ENCODE measurements at regions of chr14 and their contacts with region 1.

Region 1: DNA sequence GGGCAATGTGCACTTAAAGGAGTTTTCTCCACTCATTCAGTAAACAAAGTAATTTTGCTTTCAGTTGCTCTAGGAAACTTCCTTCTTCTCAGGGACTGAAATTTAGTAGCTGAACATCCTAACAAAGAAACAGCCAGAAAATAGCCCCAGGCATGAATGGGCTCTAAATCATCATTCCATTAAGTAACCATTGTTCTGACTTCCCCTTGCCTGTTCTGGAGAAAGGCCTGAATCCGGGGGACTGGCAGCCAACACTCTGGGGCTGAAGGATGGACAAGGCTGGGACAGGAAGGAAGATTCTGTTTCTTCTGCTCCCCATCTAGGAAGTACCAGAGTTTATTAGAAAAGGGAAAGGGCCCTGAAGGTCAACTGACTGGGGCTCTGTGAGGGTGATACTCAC is 104.5 kb downstream of the ESRRB start:
- DNase-seq: no peak
- ATAC-seq: no peak

Region 2: GRCh38 chr14:76495983-76496382 is 15.6 kb after region 1 on chr14:
- intact Hi-C with region 1: loop called (anchors 1 kb)
- DNase-seq: no peak
- ATAC-seq: no peak

Region 3: GRCh38 chr14:76564471-76565422 is 84.3 kb after region 1 on chr14:
- intact Hi-C with region 1: no loop called
- DNase-seq: no peak
- ATAC-seq: no peak

Measured in Right ventricle myocardium inferior (tissue), 1 donor.